HEK293T (cell line): ENCODE measurements at regions of chr2 and their contacts with region 1.

Region 1: GRCh38 chr2:176126929-176127773 is 2.4 kb upstream of the HOXD8 start:
- DNase-seq: no peak

Region 2: GRCh38 chr2:176001916-176002687 is 125.0 kb before region 1 on chr2 and contains the start of gene LNPK:
- CTCF ChIA-PET with region 1: no interaction called
- POLR2A ChIA-PET with region 1: no interaction called
- DNase-seq: peak; percentile 93

Region 3: GRCh38 chr2:176056406-176056805 is 70.7 kb before region 1 on chr2:
- CTCF ChIA-PET with region 1: no interaction called
- POLR2A ChIA-PET with region 1: no interaction called
- DNase-seq: no peak

Region 4: GRCh38 chr2:176106581-176107539 is 20.3 kb before region 1 on chr2 and contains the start of gene HOXD11:
- CTCF ChIA-PET with region 1: interaction called, 3 read pairs
- POLR2A ChIA-PET with region 1: interaction called, 35 read pairs
- DNase-seq: peak; percentile 81

Region 5: GRCh38 chr2:176554101-176555048 is 427.2 kb after region 1 on chr2:
- CTCF ChIA-PET with region 1: interaction called, 11 read pairs
- POLR2A ChIA-PET with region 1: no interaction called
- DNase-seq: peak; percentile 65